CD4-positive, alpha-beta T cell (primary cell): ENCODE measurements at regions of chr2 and their contacts with region 1.

Region 1: GRCh38 chr2:190343500-190344275 is at the start of gene INPP1:
- DNase-seq: peak in 12 of 14 experiments; percentile 2 to 65 (median 28)
- ATAC-seq: peak; percentile 69
- H3K4me3 ChIP-seq: peak within 1 kb of the TSS; percentile 56
- H3K4me3 Mint-ChIP-seq: peak within 1 kb of the TSS; percentile 94
- H3K27ac ChIP-seq: no peak within 1 kb of the TSS
- H3K27ac Mint-ChIP-seq: peak within 1 kb of the TSS; percentile 52
- H3K4me1 ChIP-seq: peaks cover 9% of the 10 kb centered on the region
- H3K4me1 Mint-ChIP-seq: peaks cover 9% of the 10 kb centered on the region
- H3K27me3 ChIP-seq: no peaks in the 10 kb centered on the region
- H3K27me3 Mint-ChIP-seq: peaks cover 5% of the 10 kb centered on the region
- CTCF ChIP-seq: no peak
- total RNA-seq, gene INPP1: 2.0 to 2.7 TPM

Region 2: DNA sequence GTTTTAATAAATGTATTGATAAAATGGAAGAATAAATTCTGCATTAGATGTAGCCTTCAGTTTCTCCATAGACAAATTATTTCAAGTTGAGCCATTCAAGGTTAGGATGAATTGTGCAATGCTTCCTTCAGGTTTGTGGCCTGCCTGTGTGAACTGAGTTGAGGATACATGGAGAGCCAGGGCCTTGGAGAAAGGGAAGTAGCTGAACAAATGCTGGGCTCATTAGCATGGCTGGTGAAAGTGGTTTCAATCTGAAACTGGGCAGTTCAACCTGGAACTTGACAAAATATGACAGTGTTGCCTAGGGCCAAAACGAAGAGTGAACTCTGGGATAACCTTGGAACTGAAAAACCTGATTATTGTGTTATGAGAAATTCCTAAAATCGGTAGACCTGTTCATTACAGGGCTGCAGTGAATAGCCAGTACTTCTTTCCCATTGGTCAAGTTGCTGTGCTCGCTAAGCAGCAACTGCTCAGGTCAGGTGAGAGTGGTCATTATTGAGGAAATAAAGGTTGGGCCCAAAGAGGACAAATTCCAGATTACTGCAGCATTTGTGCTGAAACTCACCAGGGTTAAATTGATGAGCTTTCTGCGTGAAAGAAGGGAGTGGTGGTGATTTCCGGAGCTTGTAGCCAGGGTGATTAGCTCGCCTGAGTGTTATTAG is 12.4 kb after region 1 on chr2:
- CTCF ChIA-PET with region 1: interaction called, 4 read pairs
- POLR2A ChIA-PET with region 1: interaction called, 22 read pairs
- intact Hi-C with region 1: loop called in 1 of 2 experiments (anchors 2 kb)
- DNase-seq: no peak
- ATAC-seq: no peak
- H3K4me3 ChIP-seq: no peak overlapping the region
- H3K4me3 Mint-ChIP-seq: no peak overlapping the region
- H3K27ac ChIP-seq: no peak overlapping the region
- H3K27ac Mint-ChIP-seq: no peak overlapping the region
- H3K4me1 ChIP-seq: peaks cover 3% of the 10 kb centered on the region
- H3K4me1 Mint-ChIP-seq: peaks cover 18% of the 10 kb centered on the region
- H3K27me3 ChIP-seq: no peaks in the 10 kb centered on the region
- H3K27me3 Mint-ChIP-seq: no peaks in the 10 kb centered on the region
- CTCF ChIP-seq: no peak

Region 3: DNA sequence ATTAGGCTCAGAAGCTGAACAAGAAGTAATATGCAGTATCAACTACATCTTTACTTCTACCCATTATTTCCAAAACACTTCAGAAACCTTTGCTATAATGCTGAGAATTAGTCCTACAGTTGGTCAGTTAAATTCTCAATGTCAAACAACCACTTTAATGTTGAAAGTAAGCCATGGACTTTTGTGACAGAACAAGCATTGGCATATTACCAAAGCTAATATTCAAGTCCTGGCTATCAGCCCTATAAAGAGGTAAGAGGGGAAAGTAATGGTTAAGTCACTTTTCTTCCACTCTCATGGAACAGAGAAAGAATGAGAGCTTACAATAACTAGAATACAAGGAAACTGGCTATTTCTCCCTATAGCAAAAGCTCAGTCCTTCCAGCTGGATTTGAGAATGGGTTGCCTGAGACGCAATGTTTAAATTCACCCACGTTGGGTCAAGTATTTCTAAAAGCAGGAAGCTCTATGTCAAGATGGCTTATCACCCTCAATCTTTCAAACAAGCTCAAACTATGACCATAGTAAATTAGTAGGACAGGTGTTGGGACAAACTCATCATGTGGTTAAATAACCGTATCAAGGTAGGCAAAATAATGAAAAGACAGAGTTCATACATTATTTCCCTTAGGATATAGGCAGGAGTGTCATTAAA is 33.0 kb after region 1 on chr2:
- CTCF ChIA-PET with region 1: no interaction called
- POLR2A ChIA-PET with region 1: interaction called, 3 read pairs
- intact Hi-C with region 1: loop called in 1 of 2 experiments (anchors 1 kb)
- DNase-seq: no peak
- ATAC-seq: no peak
- H3K4me3 ChIP-seq: no peak overlapping the region
- H3K4me3 Mint-ChIP-seq: no peak overlapping the region
- H3K27ac ChIP-seq: no peak overlapping the region
- H3K27ac Mint-ChIP-seq: no peak overlapping the region
- H3K4me1 ChIP-seq: no peaks in the 10 kb centered on the region
- H3K4me1 Mint-ChIP-seq: no peaks in the 10 kb centered on the region
- H3K27me3 ChIP-seq: no peaks in the 10 kb centered on the region
- H3K27me3 Mint-ChIP-seq: no peaks in the 10 kb centered on the region
- CTCF ChIP-seq: no peak